HepG2 (cell line): ENCODE measurements at regions of chr6 and their contacts with region 1.

Region 1: DNA sequence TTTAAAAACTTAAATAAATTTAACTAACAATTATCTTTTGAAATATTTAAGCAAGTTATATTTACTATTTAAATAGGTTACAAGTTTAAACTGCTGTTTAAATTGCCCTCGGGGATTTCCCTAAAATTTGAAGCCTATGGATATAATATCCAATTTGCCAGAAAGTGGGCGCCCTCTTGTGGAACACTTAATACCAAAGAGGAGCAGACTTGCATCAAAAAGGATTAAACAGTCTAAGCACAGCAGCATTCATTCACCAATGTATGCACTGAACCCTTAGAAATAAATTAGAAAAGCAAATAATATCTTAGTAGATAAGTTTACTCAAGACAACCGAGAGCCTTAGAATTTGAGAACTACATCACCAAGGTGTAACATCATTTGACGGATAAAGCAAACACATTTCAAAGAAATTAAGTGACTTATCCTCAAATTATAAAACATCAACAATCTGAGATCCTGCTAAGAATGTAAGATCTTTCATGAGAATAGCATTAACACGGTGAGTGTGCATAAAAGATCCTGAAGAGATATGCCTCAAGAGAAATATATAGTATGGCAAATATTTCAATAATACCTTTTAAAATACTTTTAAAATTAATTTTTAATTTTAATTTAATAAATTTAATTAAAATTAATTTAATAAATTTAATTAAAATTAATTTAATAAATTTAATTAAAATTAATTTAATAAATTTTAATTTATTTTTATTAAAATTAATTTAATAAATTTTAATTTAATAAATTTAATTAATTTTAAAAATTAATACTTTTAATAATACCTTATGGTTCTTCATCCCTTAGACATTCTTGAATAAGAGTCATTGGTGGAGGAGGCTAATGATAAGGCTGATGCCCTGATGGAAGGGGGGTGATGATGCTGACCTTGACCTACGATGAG is 11.5 kb upstream of the MEP1A start:
- DNase-seq: peak; percentile 67
- ATAC-seq: peak; percentile 83
- H3K4me3 ChIP-seq: no peak overlapping the region
- H3K27ac ChIP-seq: no peak overlapping the region
- H3K4me1 ChIP-seq: no peaks in the 10 kb centered on the region
- H3K27me3 ChIP-seq: no peaks in the 10 kb centered on the region
- CTCF ChIP-seq: peak; percentile 76
- EP300 ChIP-seq: no peak
- POLR2A ChIP-seq: no peak
- RAD21 ChIP-seq: peak; percentile 50

Region 2: DNA sequence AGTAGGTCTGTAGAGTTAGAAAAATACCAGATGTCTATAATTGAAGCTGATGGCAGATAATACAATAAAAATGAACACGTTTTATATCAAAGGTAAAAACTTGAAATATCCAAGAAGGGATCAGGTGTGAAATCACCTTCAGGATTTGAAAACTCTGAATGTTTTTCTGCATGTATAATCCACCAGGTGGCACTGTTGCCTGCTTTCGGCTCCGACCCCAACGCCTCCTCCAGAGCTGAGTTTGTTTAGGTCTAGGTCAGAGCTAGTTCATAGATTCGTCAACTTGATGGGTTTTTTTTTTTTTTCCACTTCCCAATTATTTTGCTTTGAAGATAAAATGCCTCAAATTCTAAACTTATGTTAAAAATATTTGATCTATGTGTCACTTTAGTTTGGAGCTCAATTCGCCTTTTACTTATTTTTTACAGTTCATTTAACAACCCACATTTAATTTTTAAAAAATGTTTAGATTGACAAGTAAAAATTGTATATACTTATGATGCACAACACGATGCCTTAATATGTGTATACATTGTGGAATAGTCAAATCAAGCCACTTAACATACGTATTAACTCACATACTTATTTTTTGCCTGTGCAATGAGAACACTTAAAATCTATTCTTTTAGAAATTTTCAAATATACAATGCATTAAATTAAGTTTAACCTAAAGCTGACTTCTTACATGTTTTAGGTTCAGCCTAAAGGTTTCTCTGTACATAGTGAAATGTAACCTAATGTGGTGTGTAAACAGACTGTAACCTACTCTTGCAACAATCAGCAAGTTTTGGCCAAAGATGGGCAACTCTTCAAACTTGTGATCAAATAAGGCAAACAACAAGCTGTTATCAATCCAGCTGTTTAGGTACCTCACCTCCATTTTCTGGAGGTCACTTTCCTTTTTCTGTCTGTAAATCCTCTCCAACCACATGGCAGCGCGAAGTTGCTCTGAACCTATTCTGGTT is 691.3 kb before region 1 on chr6:
- CTCF ChIA-PET with region 1: no interaction called
- POLR2A ChIA-PET with region 1: no interaction called
- in situ Hi-C with region 1: no loop called
- intact Hi-C with region 1: loop called (anchors 1 kb)
- DNase-seq: peak; percentile 50
- ATAC-seq: peak; percentile 80
- H3K4me3 ChIP-seq: no peak overlapping the region
- H3K27ac ChIP-seq: no peak overlapping the region
- H3K4me1 ChIP-seq: no peaks in the 10 kb centered on the region
- H3K27me3 ChIP-seq: no peaks in the 10 kb centered on the region
- CTCF ChIP-seq: peak; percentile 85
- EP300 ChIP-seq: no peak
- POLR2A ChIP-seq: no peak
- RAD21 ChIP-seq: no peak; the same call in 1 of the 2 replicates

Region 3: DNA sequence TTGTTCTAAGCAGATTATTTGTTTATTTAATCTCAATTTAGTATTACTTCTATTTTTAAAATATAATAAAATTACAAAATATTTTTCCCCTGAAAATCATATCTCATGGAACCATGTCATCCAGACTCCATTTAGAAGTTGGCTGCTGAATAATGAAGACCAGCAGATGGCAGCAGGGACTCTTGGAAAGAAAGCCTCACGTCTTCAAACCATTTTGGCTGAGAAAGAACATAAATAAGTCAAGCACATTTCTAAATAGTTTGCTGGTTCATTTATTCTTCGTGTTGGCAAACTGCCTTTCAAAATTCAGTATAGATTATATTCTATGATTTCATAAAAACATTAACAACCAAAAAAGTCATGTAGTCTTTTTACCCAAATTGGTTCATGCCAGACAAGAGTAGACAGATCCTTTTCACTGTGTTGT is 362.1 kb before region 1 on chr6:
- CTCF ChIA-PET with region 1: interaction called, 6 read pairs
- POLR2A ChIA-PET with region 1: no interaction called
- in situ Hi-C with region 1: no loop called
- intact Hi-C with region 1: loop called (anchors 1 kb)
- DNase-seq: peak; percentile 66
- ATAC-seq: 0 out of 3 replicates have a peak, but pooled peaks have one; percentile 44
- H3K4me3 ChIP-seq: no peak overlapping the region
- H3K27ac ChIP-seq: no peak overlapping the region
- H3K4me1 ChIP-seq: no peaks in the 10 kb centered on the region
- H3K27me3 ChIP-seq: no peaks in the 10 kb centered on the region
- CTCF ChIP-seq: peak; percentile 74
- EP300 ChIP-seq: no peak
- POLR2A ChIP-seq: no peak
- RAD21 ChIP-seq: peak; percentile 49; the same call in 1 of the 2 replicates

Region 4: DNA sequence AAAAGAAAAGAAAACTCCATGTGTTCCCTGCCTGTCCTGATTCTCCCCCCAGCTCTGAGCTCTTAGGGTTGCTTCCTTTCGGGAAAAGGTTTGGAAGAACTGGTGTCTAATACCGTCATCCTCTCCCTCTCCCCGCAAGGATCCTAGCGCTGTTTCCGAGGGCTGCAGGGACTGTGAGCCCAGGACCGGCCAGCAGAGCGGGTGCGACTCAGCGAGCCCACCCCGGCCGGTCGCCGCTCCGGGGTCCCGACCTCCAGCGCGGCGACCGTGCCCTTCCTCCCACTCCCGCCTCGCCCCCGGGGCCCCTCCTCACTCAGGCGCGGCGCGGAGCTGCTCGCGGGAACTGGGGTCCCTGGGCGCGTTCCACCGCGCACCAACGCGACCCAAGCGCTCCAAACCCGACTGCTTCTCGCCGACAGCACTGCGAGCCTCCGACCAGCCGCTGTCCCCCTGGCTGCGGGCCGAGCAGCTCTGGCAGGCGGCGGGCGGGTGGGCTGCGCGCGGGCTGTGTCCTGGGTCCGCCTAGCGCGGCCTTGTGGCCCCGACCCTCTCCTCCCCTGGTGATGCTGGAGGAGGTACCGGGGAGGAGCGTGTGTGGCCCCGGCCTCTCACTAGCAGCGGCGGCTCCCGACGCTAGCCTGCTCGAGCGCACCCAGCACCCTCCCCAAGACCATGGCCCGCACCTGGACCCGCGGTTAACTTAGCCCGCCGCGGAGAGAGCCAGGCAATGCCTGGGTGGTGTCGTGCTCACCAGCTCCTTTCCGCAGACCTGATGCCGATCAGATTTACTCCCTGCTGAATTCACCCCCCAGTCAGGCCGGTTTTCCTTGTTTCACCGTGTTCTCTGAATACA is 46.6 kb before region 1 on chr6 and contains the start of gene PLA2G7:
- CTCF ChIA-PET with region 1: no interaction called
- POLR2A ChIA-PET with region 1: no interaction called
- in situ Hi-C with region 1: no loop called
- intact Hi-C with region 1: loop called (anchors 1 kb)
- DNase-seq: no peak
- ATAC-seq: peak; percentile 87
- H3K4me3 ChIP-seq: peak within 1 kb of the TSS; percentile 31 to 67 (median 37)
- H3K27ac ChIP-seq: no peak within 1 kb of the TSS
- H3K4me1 ChIP-seq: peaks cover 18% of the 10 kb centered on the region
- H3K27me3 ChIP-seq: peaks cover 4 to 39% of the 10 kb centered on the region in 2 experiments; a peak in 4 of 5 replicates
- CTCF ChIP-seq: no peak
- EP300 ChIP-seq: no peak
- POLR2A ChIP-seq: no peak
- RAD21 ChIP-seq: no peak
- total RNA-seq, gene PLA2G7: not detected in 2 replicates

Region 5: DNA sequence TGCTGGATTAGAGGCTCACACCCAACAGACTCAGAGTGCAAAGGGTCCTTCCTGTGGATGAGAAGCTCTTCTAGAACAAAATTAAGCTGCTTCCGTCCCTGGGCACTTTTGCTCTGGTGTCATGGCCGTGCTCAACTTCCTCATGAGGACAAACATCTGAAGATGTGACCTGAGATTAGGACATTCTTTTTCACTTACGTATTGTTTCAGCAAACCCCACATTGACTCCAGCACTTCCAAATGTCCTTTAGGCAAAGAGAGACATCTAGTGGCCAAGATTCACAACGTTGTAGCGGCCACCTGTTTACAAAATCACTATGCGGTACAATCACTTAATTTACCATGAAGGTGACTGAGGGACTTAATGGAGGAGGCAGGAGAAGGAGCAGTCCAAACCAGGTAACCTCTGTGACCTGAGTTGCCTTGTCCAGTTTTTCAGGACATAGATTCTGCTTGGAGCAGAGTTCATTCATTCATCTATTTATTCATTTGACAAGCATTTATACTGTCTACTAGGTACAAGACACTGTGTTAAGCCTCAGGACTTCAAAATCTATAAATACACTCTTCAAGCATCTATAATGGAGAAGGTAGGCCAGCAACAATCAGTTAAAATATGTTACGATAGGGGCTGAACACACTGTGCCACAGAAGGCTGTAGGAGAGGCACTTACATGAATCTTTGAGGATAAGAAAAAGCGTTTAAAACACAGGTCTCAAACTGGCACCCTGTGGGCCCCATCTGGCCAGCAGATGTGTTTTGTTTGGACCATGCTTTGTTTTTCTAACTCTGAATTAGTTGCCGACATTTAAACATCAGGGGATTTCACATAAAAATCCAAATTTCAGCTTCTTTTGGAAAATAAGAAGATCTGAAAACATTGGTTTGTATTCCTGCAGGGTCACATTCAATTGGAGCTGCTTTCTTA is 266.0 kb after region 1 on chr6:
- CTCF ChIA-PET with region 1: interaction called, 5 read pairs
- POLR2A ChIA-PET with region 1: no interaction called
- in situ Hi-C with region 1: no loop called
- intact Hi-C with region 1: loop called (anchors 2 kb)
- DNase-seq: peak; percentile 95
- ATAC-seq: peak; percentile 97
- H3K4me3 ChIP-seq: peak overlapping the region in 1 of 3 experiments; percentile 26; a peak in 1 of 6 replicates
- H3K27ac ChIP-seq: no peak overlapping the region
- H3K4me1 ChIP-seq: peaks cover 28% of the 10 kb centered on the region
- H3K27me3 ChIP-seq: peaks cover 2 to 4% of the 10 kb centered on the region in 2 experiments; a peak in 2 of 5 replicates
- CTCF ChIP-seq: peak; percentile 96
- EP300 ChIP-seq: peak in 1 of 2 experiments; percentile 31; a peak in 1 of 4 replicates
- POLR2A ChIP-seq: no peak
- RAD21 ChIP-seq: peak; percentile 82